Panc1 (cell line): ENCODE measurements at regions of chr11 and their contacts with region 1.

Region 1: DNA sequence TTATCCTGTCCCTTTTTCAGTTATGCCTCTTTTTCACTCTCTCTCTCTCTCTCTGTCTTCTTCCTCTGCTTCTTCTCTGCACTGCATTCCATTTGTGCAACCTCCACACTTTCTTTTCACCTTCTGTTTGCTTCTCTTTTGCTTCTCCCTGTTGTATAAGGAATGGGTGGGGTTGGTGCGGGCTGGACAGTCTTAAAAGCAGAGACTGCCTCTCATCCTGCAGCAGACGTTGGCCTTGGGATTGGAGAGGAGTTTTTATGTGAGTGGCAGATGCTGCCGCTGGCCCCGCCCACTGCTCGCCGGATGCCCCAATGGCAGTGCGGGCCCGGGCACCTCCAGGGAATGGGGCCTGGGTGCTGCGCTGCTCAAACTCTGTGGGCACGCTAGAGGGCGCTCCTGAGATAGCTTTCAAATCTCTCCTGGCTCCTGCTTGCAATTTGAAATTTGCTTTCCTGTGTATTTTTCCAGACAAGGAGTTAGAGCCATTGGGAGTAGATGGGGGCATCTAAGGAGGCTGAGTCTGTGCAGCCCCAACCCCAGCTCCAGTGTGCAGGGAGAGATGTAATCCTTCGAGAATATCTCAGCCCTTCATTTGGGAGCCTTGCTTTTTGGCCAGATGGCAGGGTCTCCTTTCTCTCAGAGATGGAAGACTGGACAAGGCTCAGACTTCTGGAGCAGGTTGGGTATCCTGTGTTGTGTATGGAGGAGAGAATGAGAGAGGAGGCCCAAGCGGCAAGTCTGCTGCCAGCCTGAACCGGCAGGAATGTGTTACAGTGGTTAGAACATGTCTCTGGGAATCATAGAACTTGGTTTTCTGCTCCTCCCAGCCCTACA is 81.2 kb downstream of the GRAMD1B start:
- DNase-seq: peak; percentile 45
- ATAC-seq: peak; percentile 99
- H3K4me3 ChIP-seq: no peak overlapping the region
- H3K27ac ChIP-seq: no peak overlapping the region
- H3K4me1 ChIP-seq: peaks cover 3% of the 10 kb centered on the region; the same call in 1 of the 2 replicates
- H3K27me3 ChIP-seq: peaks cover 13% of the 10 kb centered on the region
- CTCF ChIP-seq: peak; percentile 98

Region 2: GRCh38 chr11:123286761-123287160 is 224.5 kb before region 1 on chr11:
- CTCF ChIA-PET with region 1: no interaction called
- POLR2A ChIA-PET with region 1: no interaction called
- in situ Hi-C with region 1: no loop called
- intact Hi-C with region 1: no loop called
- DNase-seq: no peak
- ATAC-seq: no peak
- H3K4me3 ChIP-seq: no peak overlapping the region
- H3K27ac ChIP-seq: no peak overlapping the region
- H3K4me1 ChIP-seq: no peaks in the 10 kb centered on the region
- H3K27me3 ChIP-seq: peaks cover 40% of the 10 kb centered on the region
- CTCF ChIP-seq: no peak

Region 3: GRCh38 chr11:123549926-123550917 is 39.0 kb after region 1 on chr11:
- CTCF ChIA-PET with region 1: no interaction called
- POLR2A ChIA-PET with region 1: no interaction called
- in situ Hi-C with region 1: no loop called
- intact Hi-C with region 1: loop called (anchors 5 kb)
- DNase-seq: no peak
- ATAC-seq: no peak
- H3K4me3 ChIP-seq: no peak overlapping the region
- H3K27ac ChIP-seq: no peak overlapping the region
- H3K4me1 ChIP-seq: no peaks in the 10 kb centered on the region
- H3K27me3 ChIP-seq: peaks cover 13% of the 10 kb centered on the region
- CTCF ChIP-seq: no peak

Region 4: GRCh38 chr11:123601136-123601535 is 89.9 kb after region 1 on chr11:
- CTCF ChIA-PET with region 1: no interaction called
- POLR2A ChIA-PET with region 1: no interaction called
- in situ Hi-C with region 1: no loop called
- intact Hi-C with region 1: no loop called
- DNase-seq: no peak
- ATAC-seq: no peak
- H3K4me3 ChIP-seq: no peak overlapping the region
- H3K27ac ChIP-seq: no peak overlapping the region
- H3K4me1 ChIP-seq: no peaks in the 10 kb centered on the region
- H3K27me3 ChIP-seq: peaks cover 5% of the 10 kb centered on the region; the same call in 1 of the 2 replicates
- CTCF ChIP-seq: no peak